HepG2 (cell line): ENCODE measurements at regions of chr10 and their contacts with region 1.

Region 1: DNA sequence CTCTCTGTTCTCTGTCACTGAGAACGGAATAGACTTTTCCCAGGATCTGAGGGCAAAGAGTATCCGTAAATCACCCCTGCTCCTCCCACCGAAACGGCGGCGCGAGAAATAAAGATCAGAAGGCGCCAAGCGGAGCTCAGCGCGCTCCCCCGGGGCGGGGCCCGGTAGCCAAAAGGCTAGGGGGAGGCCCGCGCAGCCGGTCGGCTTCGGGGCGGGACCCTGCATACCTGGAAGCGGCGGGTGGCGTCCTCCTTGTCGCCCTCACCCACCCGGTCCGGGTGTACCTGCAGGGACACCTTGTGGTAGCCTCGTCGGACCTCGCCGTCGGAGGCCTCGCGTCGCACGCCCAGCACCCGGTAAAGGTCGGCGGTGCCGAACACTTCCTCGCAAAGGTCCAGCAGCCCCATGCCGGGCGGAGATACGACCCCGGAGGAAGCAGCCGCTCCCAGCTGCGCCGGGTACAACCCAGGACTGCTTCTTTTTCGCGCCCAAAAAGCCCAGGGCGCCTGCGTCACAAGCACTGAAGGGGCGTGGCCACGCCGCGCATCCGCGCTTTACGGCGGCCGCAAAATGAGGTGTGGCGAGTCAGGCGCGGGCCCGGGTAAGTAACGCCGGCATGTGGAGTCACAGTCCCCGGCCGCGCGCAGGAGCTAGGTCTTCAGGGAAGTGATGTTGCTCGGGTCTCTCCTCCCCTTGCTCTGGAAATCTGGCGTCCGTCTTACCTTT is at the start of gene DNAJC9:
- DNase-seq: peak; percentile 87
- ATAC-seq: peak; percentile 90
- H3K4me3 ChIP-seq: peak within 1 kb of the TSS; percentile 64 to 97 (median 79)
- H3K27ac ChIP-seq: peak within 1 kb of the TSS; percentile 94
- H3K4me1 ChIP-seq: peaks cover 50% of the 10 kb centered on the region
- H3K27me3 ChIP-seq: no peaks in the 10 kb centered on the region; a peak in 1 of 5 replicates
- CTCF ChIP-seq: peak; percentile 75
- EP300 ChIP-seq: 0 out of 4 replicates have a peak, but pooled peaks of 1 of the 2 experiments have one; percentile 3
- POLR2A ChIP-seq: peak; percentile 89 to 96
- RAD21 ChIP-seq: peak; percentile 59
- total RNA-seq, gene DNAJC9: 60.3 and 76.9 TPM in 2 replicates

Region 2: GRCh38 chr10:73339436-73339835 is 92.5 kb after region 1 on chr10:
- CTCF ChIA-PET with region 1: no interaction called
- POLR2A ChIA-PET with region 1: no interaction called
- in situ Hi-C with region 1: no loop called
- intact Hi-C with region 1: no loop called
- DNase-seq: no peak
- ATAC-seq: peak; percentile 64
- H3K4me3 ChIP-seq: no peak overlapping the region
- H3K27ac ChIP-seq: no peak overlapping the region
- H3K4me1 ChIP-seq: no peaks in the 10 kb centered on the region
- H3K27me3 ChIP-seq: no peaks in the 10 kb centered on the region
- CTCF ChIP-seq: no peak
- EP300 ChIP-seq: no peak
- POLR2A ChIP-seq: no peak
- RAD21 ChIP-seq: no peak

Region 3: GRCh38 chr10:73358331-73359279 is 111.7 kb after region 1 on chr10 and contains the start of gene CFAP70:
- CTCF ChIA-PET with region 1: no interaction called
- POLR2A ChIA-PET with region 1: interaction called, 11 read pairs
- in situ Hi-C with region 1: no loop called
- intact Hi-C with region 1: no loop called
- DNase-seq: peak; percentile 95
- ATAC-seq: peak; percentile 93
- H3K4me3 ChIP-seq: peak within 1 kb of the TSS; percentile 61 to 88 (median 76)
- H3K27ac ChIP-seq: peak within 1 kb of the TSS; percentile 77
- H3K4me1 ChIP-seq: peaks cover 9% of the 10 kb centered on the region
- H3K27me3 ChIP-seq: no peaks in the 10 kb centered on the region
- CTCF ChIP-seq: no peak
- EP300 ChIP-seq: no peak
- POLR2A ChIP-seq: peak; percentile 66 to 74
- RAD21 ChIP-seq: no peak
- total RNA-seq, gene CFAP70: 0.13 and 0.27 TPM in 2 replicates